Colonic mucosa (tissue), 4 donors: ENCODE measurements at regions of chr3 and their contacts with region 1.

Region 1: DNA sequence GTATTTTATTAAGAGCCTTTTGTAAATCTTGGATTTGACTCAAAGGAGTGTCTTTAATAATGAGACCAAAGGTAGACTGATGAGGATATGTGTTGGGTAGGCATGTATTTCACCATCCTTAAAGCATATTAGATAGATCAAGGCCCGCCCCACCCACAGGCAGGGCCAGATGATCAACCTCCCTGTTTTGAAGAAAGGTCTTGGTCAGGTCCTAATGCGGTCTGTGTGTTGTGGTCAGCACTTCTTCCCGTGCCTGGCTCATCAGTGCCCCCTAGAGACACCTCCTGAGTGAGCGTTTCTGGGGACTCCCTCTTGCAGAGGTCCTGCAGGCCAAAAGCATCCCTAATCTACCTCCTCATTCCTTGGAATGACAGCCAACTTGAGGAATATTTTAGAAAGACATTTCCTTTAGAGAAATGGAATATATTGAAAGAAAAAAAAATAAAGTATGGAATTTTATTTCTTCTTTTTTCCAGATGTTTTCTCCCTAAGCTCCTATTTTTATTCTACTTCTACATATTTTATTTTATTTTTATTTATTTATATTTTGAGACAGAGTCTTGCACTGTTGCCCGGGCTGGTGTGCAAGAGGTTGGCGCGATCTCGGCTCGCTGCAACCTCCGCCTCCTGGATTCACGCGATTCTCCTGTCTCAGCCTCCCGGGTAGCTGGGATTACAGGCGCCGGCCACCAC is 6.0 kb downstream of the TM4SF4 start:
- DNase-seq: peak; percentile 86
- H3K4me3 ChIP-seq: no peak overlapping the region
- H3K27ac ChIP-seq: no peak overlapping the region
- H3K4me1 ChIP-seq: no peaks in the 10 kb centered on the region
- H3K27me3 ChIP-seq: no peaks in the 10 kb centered on the region
- CTCF ChIP-seq: peak; percentile 86

Region 2: DNA sequence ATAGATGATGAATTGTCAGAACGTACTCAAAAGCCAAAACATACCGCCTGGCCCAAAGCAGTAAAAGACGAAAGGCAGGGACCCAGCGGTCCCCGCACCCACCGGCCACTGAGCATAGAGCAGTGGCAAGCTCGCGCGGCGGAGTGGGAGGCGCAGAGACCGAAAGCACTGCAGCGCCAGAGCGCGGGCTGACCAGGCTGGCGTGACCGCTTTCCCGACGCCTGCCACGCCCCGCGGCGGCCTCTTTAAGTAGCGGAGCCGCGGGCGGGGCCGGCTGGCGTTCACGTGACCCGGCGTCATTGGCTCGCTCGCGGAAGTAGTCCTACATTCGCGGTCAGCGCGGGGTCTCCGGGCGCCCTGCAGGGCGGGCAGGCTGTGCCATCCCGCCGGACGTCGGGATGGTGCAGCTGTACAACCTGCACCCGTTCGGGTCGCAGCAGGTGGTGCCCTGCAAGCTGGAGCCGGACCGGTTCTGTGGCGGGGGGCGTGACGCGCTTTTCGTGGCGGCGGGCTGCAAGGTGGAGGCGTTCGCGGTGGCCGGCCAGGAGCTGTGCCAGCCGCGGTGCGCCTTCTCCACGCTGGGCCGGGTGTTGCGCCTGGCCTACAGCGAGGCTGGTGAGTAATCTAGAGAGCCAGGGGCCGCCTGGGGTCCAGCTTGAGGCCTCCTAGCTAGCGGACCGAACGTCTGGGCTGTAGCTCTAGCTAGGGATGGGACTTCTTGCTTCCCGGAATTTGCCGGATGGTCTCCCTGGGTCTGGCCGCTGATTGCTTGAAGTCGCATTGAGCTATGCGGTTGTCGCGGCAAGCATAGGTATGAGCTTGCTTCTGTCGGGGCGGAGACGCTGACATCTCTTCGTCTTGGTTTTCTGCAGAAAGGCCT is 350.9 kb before region 1 on chr3 and contains the start of gene HPS3:
- intact Hi-C with region 1: loop called (anchors 10 kb)
- DNase-seq: peak; percentile 93
- H3K4me3 ChIP-seq: peak within 1 kb of the TSS; percentile 93
- H3K27ac ChIP-seq: peak within 1 kb of the TSS; percentile 87
- H3K4me1 ChIP-seq: peaks cover 5% of the 10 kb centered on the region
- H3K27me3 ChIP-seq: no peaks in the 10 kb centered on the region
- CTCF ChIP-seq: no peak
- total RNA-seq, gene HPS3: 15.8 to 19.5 TPM

Region 3: GRCh38 chr3:149352556-149352955 is 127.9 kb before region 1 on chr3:
- intact Hi-C with region 1: loop called (anchors 5 kb)
- DNase-seq: peak; percentile 62
- H3K4me3 ChIP-seq: no peak overlapping the region
- H3K27ac ChIP-seq: no peak overlapping the region
- H3K4me1 ChIP-seq: peaks cover 4% of the 10 kb centered on the region
- H3K27me3 ChIP-seq: no peaks in the 10 kb centered on the region
- CTCF ChIP-seq: peak; percentile 76

Region 4: GRCh38 chr3:149393345-149394160 is 86.9 kb before region 1 on chr3:
- intact Hi-C with region 1: loop called (anchors 2 kb)
- DNase-seq: peak; percentile 75
- H3K4me3 ChIP-seq: no peak overlapping the region
- H3K27ac ChIP-seq: no peak overlapping the region
- H3K4me1 ChIP-seq: no peaks in the 10 kb centered on the region
- H3K27me3 ChIP-seq: no peaks in the 10 kb centered on the region
- CTCF ChIP-seq: peak; percentile 75